Heart right ventricle (tissue), 16 donors: ENCODE measurements at regions of chr7 and their contacts with region 1.

Region 1: GRCh38 chr7:112550468-112551060 is 69.8 kb downstream of the LSMEM1 start:
- DNase-seq: peak in 1 of 2 donors; percentile 39
- ATAC-seq: peak in 6 of 8 donors; percentile 38 to 74 (median 57)
- H3K4me3 ChIP-seq: no peak overlapping the region
- H3K27ac ChIP-seq: no peak overlapping the region
- H3K4me1 ChIP-seq: no peaks in the 10 kb centered on the region
- H3K27me3 ChIP-seq: peaks cover 0 to 4% (median 0%) of the 10 kb centered on the region in 7 donors
- CTCF ChIP-seq: peak; percentile 79 to 96 (median 88)

Region 2: DNA sequence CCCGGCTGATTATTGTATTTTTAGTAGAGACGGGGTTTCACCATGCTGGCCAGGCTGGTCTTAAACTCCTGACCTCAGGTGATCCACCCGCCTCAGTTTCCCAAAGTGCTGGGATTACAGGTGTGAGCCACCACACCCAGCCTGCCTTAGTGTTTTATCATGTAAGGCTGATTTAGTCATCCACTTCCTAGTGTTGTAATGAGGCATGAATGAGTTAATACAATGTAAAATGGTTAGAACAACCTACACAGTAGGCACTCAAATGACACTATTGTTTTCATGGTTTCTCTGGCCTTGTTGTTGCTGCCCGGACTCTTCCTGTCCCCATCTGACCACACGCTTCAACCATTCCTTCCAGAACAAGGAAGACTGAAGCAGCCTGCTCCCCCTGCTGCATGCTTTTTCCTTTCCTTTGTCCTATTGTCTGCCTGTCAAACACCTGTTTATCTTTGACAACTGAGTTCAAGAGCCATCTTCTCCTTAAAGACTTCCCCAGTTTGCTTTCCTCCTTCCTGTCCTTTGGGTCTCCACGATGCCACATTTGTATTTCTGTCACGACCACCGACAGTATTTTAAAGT is 34.1 kb before region 1 on chr7:
- intact Hi-C with region 1: no loop called
- DNase-seq: no peak
- ATAC-seq: no peak
- H3K4me3 ChIP-seq: no peak overlapping the region
- H3K27ac ChIP-seq: no peak overlapping the region
- H3K4me1 ChIP-seq: no peaks in the 10 kb centered on the region
- H3K27me3 ChIP-seq: peaks cover 0 to 10% (median 0%) of the 10 kb centered on the region in 7 donors
- CTCF ChIP-seq: no peak

Region 3: DNA sequence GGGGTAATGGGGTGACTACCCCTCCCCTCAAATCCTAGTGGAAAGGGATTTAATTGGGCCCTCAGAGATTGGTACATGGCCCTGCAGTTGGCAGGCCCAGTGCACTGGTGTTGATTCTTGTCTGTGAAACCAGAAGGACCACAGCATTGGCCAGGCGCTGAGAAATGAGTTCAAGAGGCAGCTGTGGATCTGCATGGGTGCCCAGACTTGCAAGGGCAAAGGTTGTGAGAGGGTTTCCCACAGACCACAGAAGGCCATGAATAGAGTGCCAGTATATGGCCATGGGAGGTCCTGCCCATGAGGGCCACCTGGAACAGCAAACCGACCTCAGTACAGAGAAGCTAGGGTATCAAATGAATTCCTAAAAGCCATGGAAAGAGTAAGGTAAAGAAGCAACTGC is 206.8 kb after region 1 on chr7:
- intact Hi-C with region 1: no loop called
- DNase-seq: no peak
- ATAC-seq: peak in 1 of 8 donors; percentile 34
- H3K4me3 ChIP-seq: no peak overlapping the region
- H3K27ac ChIP-seq: no peak overlapping the region
- H3K4me1 ChIP-seq: no peaks in the 10 kb centered on the region
- H3K27me3 ChIP-seq: no peaks in the 10 kb centered on the region
- CTCF ChIP-seq: no peak

Region 4: DNA sequence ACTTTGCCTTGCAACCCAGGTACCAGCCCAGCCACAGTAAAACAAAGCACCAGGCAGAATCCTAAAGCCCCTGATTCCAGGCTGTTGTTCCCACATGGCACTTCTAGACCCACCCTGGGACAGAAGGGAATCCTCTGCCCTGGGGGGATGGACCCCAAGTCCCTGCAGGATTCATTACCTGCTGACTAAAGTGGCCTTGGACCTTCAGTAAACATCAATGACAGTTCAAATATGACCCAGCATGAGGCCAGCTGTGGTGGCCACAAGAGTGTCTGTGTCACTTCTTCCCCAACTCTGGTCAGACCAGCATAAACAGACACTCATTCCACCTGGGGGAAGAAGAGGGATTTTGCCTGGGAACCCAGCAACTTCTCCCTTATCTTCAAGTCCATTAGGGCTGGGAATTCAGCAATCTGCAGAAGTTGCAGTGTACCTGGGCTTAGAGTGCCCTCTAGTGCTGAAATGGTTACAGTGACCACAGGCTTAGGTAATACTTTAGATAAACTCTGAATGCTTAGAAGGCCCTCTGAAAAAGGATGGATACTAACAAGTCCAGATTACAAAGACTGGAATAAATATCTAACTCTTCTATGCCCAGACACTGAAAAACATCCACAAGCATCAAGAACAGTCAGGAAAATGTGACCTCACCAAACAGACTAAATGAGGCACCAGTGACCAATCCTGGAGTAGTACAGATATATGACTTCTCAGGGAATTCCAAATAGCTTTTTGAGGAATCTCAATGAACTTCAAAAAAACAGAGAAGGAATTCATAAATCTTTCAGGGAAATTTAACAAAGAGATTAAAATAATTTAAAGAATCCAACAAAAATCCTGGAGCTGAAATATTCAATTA is 348.1 kb after region 1 on chr7:
- intact Hi-C with region 1: loop called in 6 of 10 experiments (anchors 2 to 10 kb)
- DNase-seq: peak in 1 of 2 donors; percentile 35
- ATAC-seq: peak; percentile 45 to 84 (median 72)
- H3K4me3 ChIP-seq: no peak overlapping the region
- H3K27ac ChIP-seq: no peak overlapping the region
- H3K4me1 ChIP-seq: peaks cover 0 to 28% (median 14%) of the 10 kb centered on the region in 9 donors
- H3K27me3 ChIP-seq: no peaks in the 10 kb centered on the region
- CTCF ChIP-seq: peak; percentile 10 to 81 (median 68)

Region 5: DNA sequence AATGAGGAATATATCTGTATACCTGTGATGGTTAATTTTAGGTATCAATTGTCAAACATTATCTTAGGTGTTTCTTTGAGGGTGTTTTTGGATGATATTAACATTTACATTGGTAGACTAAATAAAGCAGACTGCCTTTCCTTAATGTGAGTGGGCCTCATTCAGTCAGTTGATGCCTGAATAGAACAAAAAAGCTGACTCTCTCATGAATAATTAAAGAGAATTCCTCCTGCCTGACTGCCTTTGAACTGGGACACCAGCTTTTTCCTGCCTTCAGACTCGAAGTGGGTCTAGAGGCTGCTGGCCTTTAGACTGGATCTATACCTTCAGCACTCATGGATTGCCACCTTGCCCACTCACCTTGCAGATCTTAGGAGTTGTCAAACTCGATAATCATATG is 357.5 kb after region 1 on chr7:
- intact Hi-C with region 1: loop called in 1 of 10 experiments (anchors 10 kb)
- DNase-seq: no peak
- ATAC-seq: no peak
- H3K4me3 ChIP-seq: no peak overlapping the region
- H3K27ac ChIP-seq: no peak overlapping the region
- H3K4me1 ChIP-seq: peaks cover 0 to 5% (median 0%) of the 10 kb centered on the region in 9 donors
- H3K27me3 ChIP-seq: no peaks in the 10 kb centered on the region
- CTCF ChIP-seq: no peak

Region 6: DNA sequence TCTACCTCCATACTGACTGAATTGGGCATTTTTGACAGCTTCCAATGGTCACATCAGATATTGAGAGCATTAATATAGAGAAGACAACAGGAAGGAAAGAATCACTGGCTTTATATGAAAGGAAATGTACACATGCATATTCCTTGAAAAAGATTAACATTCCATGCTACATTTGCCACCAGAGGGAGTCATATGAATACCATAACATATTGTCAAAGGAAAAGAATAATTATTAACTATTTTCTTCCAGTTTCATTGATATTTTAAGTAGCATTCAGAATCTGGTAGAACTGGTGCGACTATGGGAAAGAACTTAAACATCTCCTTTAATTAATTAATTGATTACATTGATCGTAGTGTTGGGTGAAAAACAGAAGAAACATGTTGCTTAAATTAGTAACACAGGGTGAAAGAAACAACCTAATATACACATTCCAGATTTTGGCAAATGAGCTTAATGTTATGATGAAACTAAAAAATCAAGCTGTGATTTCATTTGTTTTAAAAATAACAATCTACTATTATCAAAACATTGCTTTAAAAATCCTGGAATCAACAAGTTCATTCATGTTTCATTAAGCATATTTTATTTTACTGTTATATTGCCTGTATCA is 464.6 kb after region 1 on chr7:
- intact Hi-C with region 1: no loop called
- DNase-seq: no peak
- ATAC-seq: no peak
- H3K4me3 ChIP-seq: no peak overlapping the region
- H3K27ac ChIP-seq: no peak overlapping the region
- H3K4me1 ChIP-seq: no peaks in the 10 kb centered on the region
- H3K27me3 ChIP-seq: no peaks in the 10 kb centered on the region
- CTCF ChIP-seq: peak in 7 of 9 donors; percentile 31 to 62 (median 55)

Region 7: DNA sequence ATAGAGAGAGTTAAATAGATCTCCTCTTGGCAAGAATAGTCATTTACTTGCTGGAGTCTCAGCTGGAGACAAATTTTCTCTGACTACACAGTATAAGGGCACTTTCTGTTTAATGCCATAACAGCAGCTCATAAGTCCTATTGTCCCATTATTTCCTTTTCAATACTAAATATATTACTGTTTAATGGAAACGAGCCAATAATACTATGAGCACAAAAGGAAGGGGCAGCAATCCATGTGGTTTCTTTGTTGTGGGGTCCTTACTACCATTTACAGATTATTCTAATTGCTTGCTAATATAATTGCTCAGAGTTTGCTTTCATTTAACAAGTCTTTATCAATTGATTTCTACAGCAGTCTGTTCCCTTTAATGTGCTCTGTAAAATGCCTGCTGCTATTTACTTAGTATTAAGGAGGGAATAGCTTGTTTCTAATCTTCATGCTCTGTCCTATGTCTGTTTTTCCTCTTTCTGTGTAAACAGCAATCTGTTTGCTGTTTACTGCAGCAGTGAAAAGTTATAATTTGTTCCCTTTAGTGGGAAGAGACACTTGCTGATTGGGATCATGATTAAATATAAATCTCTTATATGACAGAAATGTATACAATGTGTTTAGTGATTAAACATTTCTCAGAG is 864.0 kb after region 1 on chr7:
- intact Hi-C with region 1: loop called in 1 of 10 experiments (anchors 10 kb)
- DNase-seq: no peak
- ATAC-seq: no peak
- H3K4me3 ChIP-seq: no peak overlapping the region
- H3K27ac ChIP-seq: no peak overlapping the region
- H3K4me1 ChIP-seq: no peaks in the 10 kb centered on the region
- H3K27me3 ChIP-seq: no peaks in the 10 kb centered on the region
- CTCF ChIP-seq: no peak

Region 8: DNA sequence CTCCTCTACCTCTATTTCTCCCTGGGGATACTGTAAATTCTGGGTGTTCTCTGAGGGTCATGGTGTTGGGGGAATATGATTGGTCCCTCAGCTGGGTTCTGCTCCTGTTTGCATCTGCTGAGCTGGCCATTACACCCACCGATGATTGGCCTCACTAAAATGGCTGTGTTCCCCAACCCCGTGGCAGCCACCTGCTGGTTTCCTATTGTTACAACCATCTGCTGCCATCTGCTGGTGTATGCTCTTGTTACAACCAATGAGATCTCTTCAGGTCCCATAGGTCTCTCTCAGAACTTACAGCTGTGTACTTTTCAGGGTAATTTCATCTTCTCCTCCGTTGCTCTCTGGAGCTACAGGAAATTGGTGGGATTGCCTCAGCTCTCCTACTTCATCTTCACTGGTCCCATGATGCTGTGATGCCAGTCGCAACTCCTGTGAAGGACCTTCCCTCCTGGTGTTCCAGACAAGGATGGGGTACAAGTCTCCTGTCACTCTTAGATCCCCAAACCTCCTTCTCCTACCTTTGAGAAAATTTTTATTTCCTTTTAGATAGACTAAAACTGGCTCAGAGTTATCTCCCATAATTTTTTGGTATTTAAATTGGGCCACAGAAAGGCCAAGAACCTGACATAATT is 871.2 kb after region 1 on chr7:
- intact Hi-C with region 1: loop called in 9 of 10 experiments (anchors 1 to 10 kb)
- DNase-seq: peak; percentile 31 to 78
- ATAC-seq: peak; percentile 49 to 90 (median 76)
- H3K4me3 ChIP-seq: no peak overlapping the region
- H3K27ac ChIP-seq: no peak overlapping the region
- H3K4me1 ChIP-seq: peaks cover 0 to 3% (median 0%) of the 10 kb centered on the region in 9 donors
- H3K27me3 ChIP-seq: no peaks in the 10 kb centered on the region
- CTCF ChIP-seq: peak; percentile 29 to 86 (median 80)

Region 9: DNA sequence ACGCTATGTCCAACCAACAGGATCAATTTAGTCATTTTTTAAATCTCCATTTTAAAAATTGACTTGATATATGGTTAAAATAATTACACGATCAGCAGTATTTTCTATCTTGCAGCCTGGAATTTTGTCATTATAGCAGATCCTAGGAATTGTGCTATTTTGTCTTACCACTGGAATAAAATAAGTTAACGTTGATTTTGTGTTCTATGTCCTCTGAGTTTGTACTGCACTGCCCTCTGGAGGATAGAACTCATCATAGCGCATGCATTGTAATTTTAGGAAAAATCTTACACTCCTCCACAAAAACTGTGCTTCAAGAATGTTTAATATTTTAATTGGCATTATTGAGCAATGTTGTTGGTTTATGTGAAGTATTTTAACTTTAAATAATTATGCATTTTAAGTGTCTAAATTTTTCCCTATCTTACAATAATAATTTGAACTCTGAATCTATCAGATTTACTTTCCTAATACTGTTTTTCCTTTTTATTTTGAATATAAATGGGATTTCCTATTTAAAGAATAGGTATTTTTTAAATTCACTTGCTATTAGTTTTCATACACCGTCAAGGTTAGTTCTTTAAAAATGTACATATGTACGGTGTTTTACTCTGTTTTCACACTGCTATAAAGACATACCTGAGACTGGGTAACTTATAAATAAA is 1148.1 kb after region 1 on chr7:
- intact Hi-C with region 1: loop called in 1 of 10 experiments (anchors 10 kb)
- DNase-seq: no peak
- ATAC-seq: no peak
- H3K4me3 ChIP-seq: no peak overlapping the region
- H3K27ac ChIP-seq: no peak overlapping the region
- H3K4me1 ChIP-seq: no peaks in the 10 kb centered on the region
- H3K27me3 ChIP-seq: no peaks in the 10 kb centered on the region
- CTCF ChIP-seq: peak; percentile 22 to 70 (median 63)